Left ventricle myocardium superior (tissue), 1 donor: ENCODE measurements at regions of chr5 and their contacts with region 1.

Region 1: GRCh38 chr5:16791036-16791705 is 144.9 kb downstream of the MYO10 start:
- DNase-seq: no peak
- ATAC-seq: peak; percentile 27

Region 2: DNA sequence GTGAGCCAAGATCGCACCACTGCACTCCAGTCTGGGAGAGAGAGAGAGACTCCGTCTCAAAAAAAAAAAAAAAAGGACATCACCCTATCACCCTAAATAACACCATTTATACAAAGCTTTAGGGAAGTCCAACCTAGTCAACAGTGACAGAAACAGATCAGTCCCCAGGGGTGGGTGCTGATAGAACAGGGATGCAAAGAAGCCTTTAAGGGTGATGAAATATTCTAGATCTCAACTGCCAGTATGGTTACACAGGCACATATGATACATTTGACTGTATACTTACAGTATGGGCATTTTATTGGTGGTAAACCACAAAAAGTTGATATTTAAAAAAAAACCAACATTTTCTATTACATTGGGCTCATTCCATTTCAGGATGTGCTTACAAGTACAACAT is 179.2 kb before region 1 on chr5:
- intact Hi-C with region 1: no loop called
- DNase-seq: no peak
- ATAC-seq: no peak

Region 3: GRCh38 chr5:16712620-16713019 is 78.6 kb before region 1 on chr5:
- intact Hi-C with region 1: no loop called
- DNase-seq: no peak
- ATAC-seq: no peak

Region 4: DNA sequence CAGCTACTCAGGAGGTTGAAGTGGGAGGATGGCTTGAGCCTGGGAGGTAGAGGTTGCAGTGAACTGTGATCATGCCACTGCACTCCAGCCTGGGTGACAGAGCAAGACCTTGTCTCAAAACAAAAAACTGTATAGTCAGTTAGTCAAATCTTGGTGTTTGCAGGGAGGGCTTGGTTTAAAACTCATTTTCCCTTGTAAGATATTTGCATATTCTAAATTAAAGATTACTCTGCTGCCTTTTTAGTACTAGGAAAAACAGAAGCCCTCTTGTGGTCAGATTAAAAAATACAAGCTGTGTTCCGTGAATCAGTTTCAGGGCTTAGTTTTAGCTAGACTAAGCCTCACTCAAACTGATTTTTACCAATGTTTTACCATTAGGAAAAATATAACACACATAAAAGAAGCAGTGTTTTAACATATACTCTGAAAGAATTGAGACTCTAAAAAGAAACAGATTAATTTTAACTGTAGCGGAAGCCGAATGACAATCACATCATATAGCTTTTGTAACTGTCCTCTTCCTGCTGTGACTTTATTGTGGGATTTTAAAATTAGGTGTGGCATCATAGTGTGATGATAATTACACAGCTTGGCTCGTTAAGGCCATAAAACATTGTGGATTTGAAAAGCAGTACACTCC is 341.4 kb after region 1 on chr5:
- intact Hi-C with region 1: loop called (anchors 5 kb)
- DNase-seq: no peak
- ATAC-seq: peak; percentile 32

Region 5: DNA sequence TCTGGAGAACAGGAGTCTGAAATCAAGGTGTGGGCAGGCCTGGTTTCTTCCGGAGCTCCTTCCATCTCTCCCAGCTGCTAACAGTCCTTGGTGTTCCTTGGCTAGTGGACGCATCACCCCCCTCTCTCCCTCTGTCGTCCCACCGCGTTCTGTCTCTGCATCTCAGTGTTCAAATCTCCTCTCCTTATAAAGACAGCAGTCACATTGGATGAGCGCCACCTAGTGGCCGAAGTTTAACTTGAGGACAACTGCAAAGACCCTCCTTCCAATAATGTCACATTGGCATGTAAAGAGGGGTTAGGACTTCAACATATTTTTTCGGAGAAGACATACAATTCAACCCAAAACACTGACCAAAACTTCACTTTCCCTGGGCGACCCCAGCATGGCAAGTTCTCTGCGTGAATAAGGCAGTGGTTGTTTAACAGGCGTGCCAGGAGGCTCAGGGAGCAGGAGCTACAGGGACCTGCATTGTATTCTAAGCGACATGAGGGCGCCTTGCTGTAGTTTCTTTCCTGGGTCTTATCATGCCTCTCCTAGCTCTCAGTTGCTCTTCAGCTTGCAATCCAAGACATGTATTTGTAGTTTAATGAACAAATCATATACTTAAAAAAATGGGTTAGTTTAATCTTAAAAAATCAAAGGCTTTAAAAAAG is 398.3 kb after region 1 on chr5:
- intact Hi-C with region 1: loop called (anchors 5 kb)
- DNase-seq: peak; percentile 81
- ATAC-seq: peak; percentile 71